Calu3 (cell line): ENCODE measurements at regions of chr5 and their contacts with region 1.

Region 1: GRCh38 chr5:32709781-32710549 is 1.2 kb upstream of the NPR3 start:
- DNase-seq: peak; percentile 71
- H3K4me3 Mint-ChIP-seq: peak overlapping the region; percentile 79
- H3K27ac Mint-ChIP-seq: no peak overlapping the region
- H3K4me1 Mint-ChIP-seq: peaks cover 8% of the 10 kb centered on the region
- H3K27me3 Mint-ChIP-seq: no peaks in the 10 kb centered on the region
- CTCF ChIP-seq: peak; percentile 70

Region 2: GRCh38 chr5:32600057-32600622 is 109.8 kb before region 1 on chr5:
- CTCF ChIA-PET with region 1: no interaction called
- intact Hi-C with region 1: no loop called
- DNase-seq: no peak
- H3K4me3 Mint-ChIP-seq: no peak overlapping the region
- H3K27ac Mint-ChIP-seq: no peak overlapping the region
- H3K4me1 Mint-ChIP-seq: peaks cover 25% of the 10 kb centered on the region
- H3K27me3 Mint-ChIP-seq: no peaks in the 10 kb centered on the region
- CTCF ChIP-seq: no peak

Region 3: DNA sequence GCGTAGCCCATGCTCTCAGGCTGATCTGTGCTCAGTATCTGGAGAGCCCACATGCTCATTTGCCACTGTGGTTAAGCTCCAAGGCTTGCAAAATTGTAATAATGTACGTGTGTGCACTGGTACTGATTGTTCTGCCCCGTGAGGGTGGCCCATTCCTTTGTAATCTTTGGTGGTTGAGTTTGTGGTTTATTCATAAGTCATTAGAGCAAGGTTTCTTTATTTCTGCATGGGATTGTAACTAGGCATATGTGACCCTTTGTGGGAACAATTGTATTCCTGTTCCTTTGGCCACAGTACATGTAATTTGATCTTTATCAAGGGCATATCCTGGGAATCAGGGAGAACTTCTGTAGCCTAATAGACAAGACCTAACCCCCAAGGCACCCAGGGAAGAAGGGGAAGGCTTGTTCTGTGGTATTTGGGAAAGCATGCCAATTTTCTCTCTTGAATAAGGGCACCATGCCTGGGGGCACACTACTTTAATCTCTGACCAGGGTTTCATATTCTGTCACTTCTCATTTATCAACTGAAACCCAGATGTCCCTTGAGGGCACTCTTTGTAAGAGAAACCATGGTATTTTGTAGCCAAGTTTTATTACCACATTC is 75.7 kb after region 1 on chr5:
- CTCF ChIA-PET with region 1: no interaction called
- intact Hi-C with region 1: loop called (anchors 5 kb)
- DNase-seq: peak; percentile 16
- H3K4me3 Mint-ChIP-seq: no peak overlapping the region
- H3K27ac Mint-ChIP-seq: no peak overlapping the region
- H3K4me1 Mint-ChIP-seq: peaks cover 8% of the 10 kb centered on the region
- H3K27me3 Mint-ChIP-seq: peaks cover 38% of the 10 kb centered on the region
- CTCF ChIP-seq: no peak

Region 4: DNA sequence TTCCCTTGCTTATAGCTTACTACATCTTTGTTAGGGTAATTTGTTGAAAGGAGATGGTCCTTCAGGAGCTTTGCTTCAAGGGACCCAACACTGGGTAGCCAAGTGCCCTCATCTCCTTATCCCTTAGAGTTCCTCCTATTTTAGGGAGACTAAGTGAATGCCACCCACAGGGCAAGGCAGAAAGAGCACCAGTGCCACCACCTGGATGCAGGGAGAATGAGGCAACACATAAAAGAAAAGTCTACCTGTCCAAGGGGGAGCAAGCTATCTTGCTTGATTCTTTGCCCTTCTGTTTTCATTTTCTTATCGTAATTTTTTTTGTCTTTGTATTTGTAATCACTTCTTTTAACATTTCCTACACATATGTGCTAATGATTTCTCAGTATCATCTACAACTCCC is 206.7 kb after region 1 on chr5:
- CTCF ChIA-PET with region 1: no interaction called
- intact Hi-C with region 1: loop called (anchors 1 kb)
- DNase-seq: peak; percentile 50
- H3K4me3 Mint-ChIP-seq: no peak overlapping the region
- H3K27ac Mint-ChIP-seq: no peak overlapping the region
- H3K4me1 Mint-ChIP-seq: no peaks in the 10 kb centered on the region
- H3K27me3 Mint-ChIP-seq: peaks cover 25% of the 10 kb centered on the region
- CTCF ChIP-seq: peak; percentile 54

Region 5: GRCh38 chr5:33299621-33300208 is 589.8 kb after region 1 on chr5:
- CTCF ChIA-PET with region 1: no interaction called
- intact Hi-C with region 1: loop called (anchors 5 kb)
- DNase-seq: peak; percentile 21
- H3K4me3 Mint-ChIP-seq: no peak overlapping the region
- H3K27ac Mint-ChIP-seq: no peak overlapping the region
- H3K4me1 Mint-ChIP-seq: no peaks in the 10 kb centered on the region
- H3K27me3 Mint-ChIP-seq: no peaks in the 10 kb centered on the region
- CTCF ChIP-seq: no peak